Aorta (tissue), 5 donors: ENCODE measurements at regions of chr21 and their contacts with region 1.

Region 1: DNA sequence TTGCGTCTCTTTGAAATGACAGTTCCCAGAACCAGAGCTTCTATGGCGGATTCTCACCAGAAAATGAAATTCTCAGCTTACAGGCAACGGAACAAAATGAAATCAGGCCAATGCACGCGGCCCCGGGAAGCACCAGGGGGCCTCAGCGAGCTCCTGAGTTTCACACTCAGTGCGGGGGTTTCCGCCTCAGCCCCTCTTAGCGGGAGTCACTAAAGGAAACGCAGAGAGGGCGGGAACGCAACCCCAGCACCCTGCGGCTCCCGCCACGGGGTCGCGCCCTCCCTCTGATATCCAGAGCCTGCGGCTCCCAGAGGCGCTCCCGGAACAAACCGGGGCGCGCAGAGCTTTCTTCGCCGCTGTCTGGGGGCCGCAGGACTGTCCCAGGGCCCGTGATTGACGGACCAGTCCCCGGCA is 7.9 kb upstream of the COL6A1 start:
- DNase-seq: peak; percentile 90 to 94
- ATAC-seq: peak; percentile 74
- H3K4me3 ChIP-seq: peak overlapping the region; percentile 39 to 54
- H3K27ac ChIP-seq: peak overlapping the region; percentile 99
- H3K4me1 ChIP-seq: no peaks in the 10 kb centered on the region
- H3K27me3 ChIP-seq: no peaks in the 10 kb centered on the region

Region 2: GRCh38 chr21:45957981-45958600 is 15.6 kb before region 1 on chr21:
- intact Hi-C with region 1: loop called in 1 of 2 experiments (anchors 2 kb)
- DNase-seq: peak; percentile 79 to 83
- ATAC-seq: peak; percentile 86
- H3K4me3 ChIP-seq: no peak overlapping the region
- H3K27ac ChIP-seq: peak overlapping the region; percentile 85 to 94
- H3K4me1 ChIP-seq: peaks cover 0 to 4% of the 10 kb centered on the region in 2 donors
- H3K27me3 ChIP-seq: no peaks in the 10 kb centered on the region

Region 3: GRCh38 chr21:46060596-46061061 is 87.0 kb after region 1 on chr21:
- intact Hi-C with region 1: loop called in 1 of 2 experiments (anchors 5 kb)
- DNase-seq: peak; percentile 91 to 93
- ATAC-seq: peak; percentile 78
- H3K4me3 ChIP-seq: no peak overlapping the region
- H3K27ac ChIP-seq: peak overlapping the region; percentile 87 to 93
- H3K4me1 ChIP-seq: peaks cover 0 to 2% of the 10 kb centered on the region in 2 donors
- H3K27me3 ChIP-seq: no peaks in the 10 kb centered on the region

Region 4: GRCh38 chr21:46071082-46071481 is 97.4 kb after region 1 on chr21:
- intact Hi-C with region 1: no loop called
- DNase-seq: peak; percentile 20 to 60
- ATAC-seq: no peak
- H3K4me3 ChIP-seq: no peak overlapping the region
- H3K27ac ChIP-seq: no peak overlapping the region
- H3K4me1 ChIP-seq: no peaks in the 10 kb centered on the region
- H3K27me3 ChIP-seq: no peaks in the 10 kb centered on the region

Region 5: DNA sequence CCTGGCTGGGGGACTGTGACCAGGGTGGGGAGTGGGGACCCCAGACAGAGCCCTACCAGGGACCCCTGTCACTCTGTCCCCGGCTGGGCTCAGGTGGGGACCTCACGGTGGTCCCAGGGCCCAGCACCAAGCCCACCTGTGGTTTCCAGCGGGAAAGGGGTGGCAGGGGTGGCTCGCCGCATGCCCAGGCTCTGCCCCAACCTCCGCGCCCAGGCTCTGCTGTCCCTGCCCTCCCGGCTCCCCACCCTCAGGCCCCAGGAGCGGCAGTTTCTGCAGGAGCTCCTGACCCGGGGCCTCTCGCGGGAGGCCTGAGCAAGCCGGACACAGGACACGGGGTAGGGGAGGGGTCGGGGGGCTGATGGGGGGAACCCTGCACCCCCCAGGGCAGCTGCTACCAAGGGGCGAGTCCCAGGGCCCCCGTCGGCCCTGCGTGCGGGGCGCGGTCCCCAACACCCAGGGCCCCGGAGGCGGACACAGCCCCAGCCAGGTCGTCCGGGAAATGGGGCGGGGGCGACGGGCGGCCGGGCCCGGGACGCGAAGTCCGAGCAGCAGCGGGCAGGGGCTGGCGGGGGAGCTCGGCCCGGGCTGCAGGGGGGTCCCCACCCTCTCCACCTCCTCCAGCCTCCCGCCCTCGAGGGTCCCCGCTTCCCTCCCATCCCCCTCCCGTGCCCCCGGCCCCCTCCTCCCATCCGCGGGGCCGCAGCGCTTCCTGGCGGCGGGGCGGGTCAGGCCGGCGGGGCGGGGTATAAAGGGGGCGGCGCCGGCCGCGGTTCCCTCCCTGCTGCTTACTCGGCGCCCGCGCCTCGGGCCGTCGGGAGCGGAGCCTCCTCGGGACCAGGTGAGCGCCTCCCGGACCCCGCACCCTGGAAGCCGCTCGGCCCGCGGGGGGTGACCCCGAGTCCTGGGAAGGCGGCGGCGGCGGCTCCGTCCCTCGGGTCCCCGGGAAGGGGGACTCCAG is 123.9 kb after region 1 on chr21 and contains the start of gene COL6A2:
- intact Hi-C with region 1: loop called (anchors 1 to 2 kb)
- DNase-seq: peak; percentile 75 to 91
- ATAC-seq: peak; percentile 87
- H3K4me3 ChIP-seq: peak within 1 kb of the TSS; percentile 84 to 98
- H3K27ac ChIP-seq: peak within 1 kb of the TSS; percentile 92
- H3K4me1 ChIP-seq: no peaks in the 10 kb centered on the region
- H3K27me3 ChIP-seq: no peaks in the 10 kb centered on the region
- total RNA-seq, gene COL6A2: 1,386 to 1,431 TPM

Region 6: GRCh38 chr21:46110499-46111192 is 137.0 kb after region 1 on chr21:
- intact Hi-C with region 1: loop called in 1 of 2 experiments (anchors 2 kb)
- DNase-seq: peak; percentile 66 to 72
- ATAC-seq: peak; percentile 79
- H3K4me3 ChIP-seq: no peak overlapping the region
- H3K27ac ChIP-seq: peak overlapping the region in 1 of 2 donors; percentile 35
- H3K4me1 ChIP-seq: peaks cover 0 to 6% of the 10 kb centered on the region in 2 donors
- H3K27me3 ChIP-seq: no peaks in the 10 kb centered on the region

Region 7: GRCh38 chr21:46228345-46229051 is 254.8 kb after region 1 on chr21 and contains the start of gene LSS:
- intact Hi-C with region 1: loop called (anchors 5 kb)
- DNase-seq: peak; percentile 99 to 100
- ATAC-seq: peak; percentile 96
- H3K4me3 ChIP-seq: peak within 1 kb of the TSS; percentile 69 to 95
- H3K27ac ChIP-seq: peak within 1 kb of the TSS; percentile 20 to 76
- H3K4me1 ChIP-seq: peaks cover 0 to 3% of the 10 kb centered on the region in 2 donors
- H3K27me3 ChIP-seq: no peaks in the 10 kb centered on the region
- total RNA-seq, gene LSS: 60.2 to 85.2 TPM